H1 (cell line): ENCODE measurements at regions of chr11 and their contacts with region 1.

Region 1: GRCh38 chr11:3841426-3842350 is 929 bp upstream of the RHOG start:
- DNase-seq: peak in 1 of 2 experiments; percentile 59
- H3K4me3 ChIP-seq: peak overlapping the region; percentile 36 to 97 (median 59)
- H3K27ac ChIP-seq: no peak overlapping the region
- H3K4me1 ChIP-seq: peaks cover 5 to 14% (median 8%) of the 10 kb centered on the region in 4 experiments; a peak in 4 of 7 replicates
- H3K27me3 ChIP-seq: peaks cover 0 to 3% (median 0%) of the 10 kb centered on the region in 4 experiments; a peak in 1 of 7 replicates
- CTCF ChIP-seq: peak; percentile 66 to 83 (median 72)
- EP300 ChIP-seq: 0 out of 3 replicates have a peak, but pooled peaks of 1 of the 2 experiments have one; percentile 6
- POLR2A ChIP-seq: no peak
- RAD21 ChIP-seq: peak; percentile 40 to 68; a peak in 3 of 4 replicates

Region 2: DNA sequence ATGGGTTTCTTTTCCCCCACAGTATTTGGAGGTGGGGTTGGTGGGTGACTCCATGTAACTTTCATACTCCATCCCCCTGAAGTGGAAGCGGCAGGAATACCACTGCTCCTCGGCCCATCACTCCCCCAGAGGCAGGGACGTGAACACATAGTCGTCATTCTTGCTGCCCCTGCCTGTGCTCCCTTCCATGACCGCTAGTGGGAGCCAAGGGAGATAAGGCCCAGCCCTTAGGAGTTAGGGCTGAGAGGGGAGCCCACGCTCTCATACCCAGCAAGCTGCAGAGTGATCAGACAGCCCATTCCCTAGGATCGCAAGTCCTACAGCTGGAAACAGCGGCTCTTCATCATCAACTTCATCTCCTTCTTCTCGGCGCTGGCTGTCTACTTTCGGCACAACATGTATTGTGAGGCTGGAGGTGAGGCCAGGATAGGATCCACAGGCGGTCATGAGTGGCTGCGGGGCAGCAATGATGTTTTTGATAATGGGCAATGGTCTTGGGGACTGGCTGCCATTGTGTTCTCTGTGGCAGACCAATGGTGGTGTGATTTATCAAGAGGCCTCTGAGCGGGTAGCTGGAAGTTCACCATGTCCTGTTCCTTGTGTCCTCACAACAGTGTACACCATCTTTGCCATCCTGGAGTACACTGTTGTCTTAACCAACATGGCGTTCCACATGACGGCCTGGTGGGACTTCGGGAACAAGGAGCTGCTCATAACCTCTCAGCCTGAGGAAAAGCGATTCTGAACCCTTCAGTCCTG is 16.8 kb before region 1 on chr11:
- CTCF ChIA-PET with region 1: interaction called, 214 read pairs
- POLR2A ChIA-PET with region 1: interaction called, 29 read pairs
- DNase-seq: peak; percentile 75 to 96
- H3K4me3 ChIP-seq: no peak overlapping the region
- H3K27ac ChIP-seq: peak overlapping the region; percentile 22; the same call in 1 of the 2 replicates
- H3K4me1 ChIP-seq: peaks cover 22 to 32% (median 24%) of the 10 kb centered on the region in 4 experiments
- H3K27me3 ChIP-seq: no peaks in the 10 kb centered on the region
- CTCF ChIP-seq: peak; percentile 99 to 100 (median 100)
- EP300 ChIP-seq: no peak
- POLR2A ChIP-seq: peak; percentile 48 to 60
- RAD21 ChIP-seq: peak; percentile 77 to 80